ENCODE measurements at regions of chr22 and their contacts with region 1.

Region 1: DNA sequence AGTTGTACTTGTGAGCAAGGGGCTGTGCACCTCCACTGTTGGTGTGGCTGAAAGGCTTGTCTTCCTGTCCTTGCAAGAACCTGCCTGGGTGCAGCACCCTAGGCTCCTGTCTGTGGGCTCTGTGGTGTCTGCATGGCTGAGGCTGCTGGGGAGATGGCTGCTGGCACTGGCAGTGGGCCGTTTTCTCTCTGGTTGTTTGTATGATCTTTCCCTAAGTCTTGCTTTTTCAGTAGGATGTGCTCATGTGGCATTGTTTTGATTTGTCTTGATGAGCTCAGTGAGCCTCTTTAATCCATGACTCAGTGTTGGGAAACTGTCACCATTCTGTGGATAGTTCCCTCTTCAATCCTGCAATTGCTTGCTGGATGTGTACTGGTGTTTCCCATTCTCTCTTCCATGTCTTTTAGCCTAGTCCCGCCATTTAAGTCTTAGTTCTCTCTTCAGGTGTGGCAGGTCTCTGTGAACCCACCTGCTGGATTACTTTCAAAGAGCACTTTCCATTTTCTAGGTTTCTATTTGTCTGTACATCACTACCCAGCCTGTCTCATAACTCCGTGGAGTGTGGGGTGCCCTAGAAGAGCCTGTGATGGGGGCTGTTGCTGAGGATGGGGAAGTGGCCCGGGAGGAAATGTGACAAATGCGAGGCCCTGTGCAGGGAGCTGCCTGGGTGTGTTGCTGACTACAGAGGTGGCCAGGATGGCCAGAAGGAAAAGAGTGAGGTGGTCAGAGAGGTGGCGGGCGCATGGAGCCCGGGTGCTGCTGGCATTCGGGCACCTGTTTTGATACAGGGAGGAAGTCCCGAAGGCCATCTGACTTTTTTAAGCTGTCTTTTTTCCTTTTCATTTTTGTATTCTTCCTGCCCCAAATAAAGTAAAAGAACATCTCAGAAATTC is 10.6 kb downstream of the DGCR8 start:
- DNase-seq: peak; percentile 30
- ATAC-seq: peak; percentile 43
- H3K4me3 Mint-ChIP-seq: peak overlapping the region; percentile 11
- H3K27ac Mint-ChIP-seq: peak overlapping the region; percentile 72
- H3K4me1 Mint-ChIP-seq: peaks cover 79% of the 10 kb centered on the region
- H3K27me3 Mint-ChIP-seq: no peaks in the 10 kb centered on the region
- CTCF ChIP-seq: no peak

Region 2: DNA sequence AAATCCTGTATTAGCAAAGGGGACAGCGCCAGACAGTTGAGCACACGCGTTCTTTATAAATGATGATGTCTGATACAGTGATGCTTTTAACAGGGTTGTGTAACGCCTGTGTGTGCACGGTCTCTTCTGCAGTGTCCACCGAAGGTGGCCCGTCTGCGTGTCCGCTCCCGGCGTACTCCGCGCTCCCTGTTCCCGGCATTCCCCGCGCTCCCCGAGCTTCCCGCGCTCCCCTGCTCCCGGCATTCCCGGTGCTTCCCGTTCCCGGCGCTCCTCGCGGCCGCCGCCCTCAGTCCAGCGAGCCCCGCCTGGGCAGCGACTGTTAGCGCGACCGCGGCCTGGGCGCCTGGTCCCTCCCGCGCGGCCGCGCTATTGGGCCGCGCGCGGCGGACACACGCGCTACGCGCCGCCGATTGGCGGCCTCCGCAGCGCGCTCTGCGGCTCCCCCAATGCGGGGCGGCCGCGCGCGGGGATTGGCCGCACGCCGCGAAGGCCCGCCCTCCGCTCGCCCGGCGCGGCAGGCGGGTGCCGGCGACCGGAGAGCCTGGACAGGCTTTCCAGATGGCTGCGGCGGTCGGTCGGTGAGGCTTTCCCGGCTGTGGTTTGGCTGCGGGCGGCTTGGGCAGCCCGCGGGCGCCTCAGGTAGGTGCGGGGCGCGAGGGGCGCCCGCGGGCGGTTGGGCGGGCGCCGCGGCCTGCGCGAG is 10.7 kb before region 1 on chr22 and contains the start of gene DGCR8:
- CTCF ChIA-PET with region 1: interaction called, 10 read pairs
- POLR2A ChIA-PET with region 1: interaction called, 6 read pairs
- intact Hi-C with region 1: no loop called
- DNase-seq: peak; percentile 56
- ATAC-seq: peak; percentile 92
- H3K4me3 Mint-ChIP-seq: peak within 1 kb of the TSS; percentile 91
- H3K27ac Mint-ChIP-seq: peak within 1 kb of the TSS; percentile 88
- H3K4me1 Mint-ChIP-seq: peaks cover 35% of the 10 kb centered on the region
- H3K27me3 Mint-ChIP-seq: no peaks in the 10 kb centered on the region
- CTCF ChIP-seq: no peak
- total RNA-seq, gene DGCR8: 35.0 to 38.8 TPM

Region 3: GRCh38 chr22:20111045-20111688 is 20.6 kb after region 1 on chr22:
- CTCF ChIA-PET with region 1: interaction called, 11 read pairs
- POLR2A ChIA-PET with region 1: interaction called, 5 read pairs
- intact Hi-C with region 1: no loop called
- DNase-seq: peak; percentile 82
- ATAC-seq: peak; percentile 80
- H3K4me3 Mint-ChIP-seq: peak overlapping the region; percentile 21
- H3K27ac Mint-ChIP-seq: peak overlapping the region; percentile 98
- H3K4me1 Mint-ChIP-seq: peaks cover 50% of the 10 kb centered on the region
- H3K27me3 Mint-ChIP-seq: no peaks in the 10 kb centered on the region
- CTCF ChIP-seq: peak; percentile 77

Measured in activated CD8-positive, alpha-beta T cell treated with anti-CD3 and anti-CD28 coated beads for 36 hours (primary cell).